Breast epithelium (tissue), 4 donors: ENCODE measurements at regions of chr1 and their contacts with region 1.

Region 1: GRCh38 chr1:160097911-160098851 is at the start of gene IGSF8:
- DNase-seq: peak; percentile 89 to 96
- H3K4me3 ChIP-seq: peak within 1 kb of the TSS; percentile 87 to 95 (median 88)
- H3K27ac ChIP-seq: peak within 1 kb of the TSS; percentile 90 to 91
- H3K4me1 ChIP-seq: peaks cover 14 to 26% of the 10 kb centered on the region in 2 donors
- H3K27me3 ChIP-seq: no peaks in the 10 kb centered on the region
- CTCF ChIP-seq: no peak
- POLR2A ChIP-seq: peak; percentile 46
- total RNA-seq, gene IGSF8: 21.0 to 35.7 (median 24.5) TPM

Region 2: GRCh38 chr1:158945061-158945460 is 1153.1 kb before region 1 on chr1:
- intact Hi-C with region 1: loop called (anchors 5 kb)
- DNase-seq: no peak
- H3K4me3 ChIP-seq: no peak overlapping the region
- H3K27ac ChIP-seq: no peak overlapping the region
- H3K4me1 ChIP-seq: no peaks in the 10 kb centered on the region
- H3K27me3 ChIP-seq: no peaks in the 10 kb centered on the region
- CTCF ChIP-seq: no peak
- POLR2A ChIP-seq: no peak

Region 3: DNA sequence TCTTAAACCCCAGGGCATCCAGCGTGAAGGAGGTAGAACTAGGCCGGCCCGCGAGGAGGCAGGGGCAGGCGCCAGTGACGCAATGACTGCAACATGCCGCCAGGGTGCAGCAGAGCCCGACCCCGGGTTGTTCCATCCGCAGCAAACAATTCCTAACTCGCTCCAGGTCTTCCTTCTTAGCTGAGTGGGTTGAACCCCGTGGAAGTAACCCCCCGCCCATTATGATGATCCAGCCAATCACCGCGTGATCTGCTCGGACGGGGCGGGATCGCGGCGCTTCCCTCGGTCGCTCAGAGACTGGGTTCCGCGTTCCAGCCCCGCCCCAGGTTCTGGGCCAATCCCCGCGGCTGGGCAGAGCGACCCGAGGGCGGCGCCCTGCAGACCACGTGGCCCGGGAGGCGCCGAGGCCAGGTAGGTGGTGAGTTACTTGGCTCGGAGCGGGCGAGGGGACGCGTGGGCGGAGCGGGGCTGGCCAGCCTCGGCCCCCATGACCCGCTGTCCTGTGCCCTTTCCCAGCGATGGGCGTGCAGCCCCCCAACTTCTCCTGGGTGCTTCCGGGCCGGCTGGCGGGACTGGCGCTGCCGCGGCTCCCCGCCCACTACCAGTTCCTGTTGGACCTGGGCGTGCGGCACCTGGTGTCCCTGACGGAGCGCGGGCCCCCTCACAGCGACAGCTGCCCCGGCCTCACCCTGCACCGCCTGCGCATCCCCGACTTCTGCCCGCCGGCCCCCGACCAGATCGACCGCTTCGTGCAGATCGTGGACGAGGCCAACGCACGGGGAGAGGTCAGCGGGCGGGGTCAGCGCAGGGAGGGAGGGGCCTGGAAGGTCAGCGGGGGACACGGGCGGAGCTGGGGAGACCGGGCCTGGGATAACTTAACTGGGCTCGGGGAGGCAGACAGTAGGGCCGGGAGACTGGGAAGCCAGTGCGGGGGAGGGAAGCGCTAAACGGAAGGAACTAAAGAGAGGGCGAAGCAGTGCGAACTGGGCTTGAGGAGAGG is 317.3 kb before region 1 on chr1 and contains the start of gene DUSP23:
- intact Hi-C with region 1: loop called (anchors 2 kb)
- DNase-seq: peak; percentile 98 to 99
- H3K4me3 ChIP-seq: peak within 1 kb of the TSS; percentile 78 to 83 (median 79)
- H3K27ac ChIP-seq: peak within 1 kb of the TSS; percentile 85 to 86
- H3K4me1 ChIP-seq: peaks cover 0 to 7% of the 10 kb centered on the region in 2 donors
- H3K27me3 ChIP-seq: no peaks in the 10 kb centered on the region
- CTCF ChIP-seq: peak; percentile 96 to 99 (median 97)
- POLR2A ChIP-seq: peak; percentile 62
- total RNA-seq, gene DUSP23: 92.7 to 187 (median 147) TPM

Region 4: GRCh38 chr1:160061369-160062229 is 36.6 kb before region 1 on chr1:
- intact Hi-C with region 1: loop called (anchors 1 kb)
- DNase-seq: peak in 1 of 2 donors; percentile 70
- H3K4me3 ChIP-seq: no peak overlapping the region
- H3K27ac ChIP-seq: no peak overlapping the region
- H3K4me1 ChIP-seq: no peaks in the 10 kb centered on the region
- H3K27me3 ChIP-seq: peaks cover 0 to 11% of the 10 kb centered on the region in 2 donors
- CTCF ChIP-seq: no peak
- POLR2A ChIP-seq: no peak